ENCODE measurements at regions of chr19 and their contacts with region 1.

Region 1: DNA sequence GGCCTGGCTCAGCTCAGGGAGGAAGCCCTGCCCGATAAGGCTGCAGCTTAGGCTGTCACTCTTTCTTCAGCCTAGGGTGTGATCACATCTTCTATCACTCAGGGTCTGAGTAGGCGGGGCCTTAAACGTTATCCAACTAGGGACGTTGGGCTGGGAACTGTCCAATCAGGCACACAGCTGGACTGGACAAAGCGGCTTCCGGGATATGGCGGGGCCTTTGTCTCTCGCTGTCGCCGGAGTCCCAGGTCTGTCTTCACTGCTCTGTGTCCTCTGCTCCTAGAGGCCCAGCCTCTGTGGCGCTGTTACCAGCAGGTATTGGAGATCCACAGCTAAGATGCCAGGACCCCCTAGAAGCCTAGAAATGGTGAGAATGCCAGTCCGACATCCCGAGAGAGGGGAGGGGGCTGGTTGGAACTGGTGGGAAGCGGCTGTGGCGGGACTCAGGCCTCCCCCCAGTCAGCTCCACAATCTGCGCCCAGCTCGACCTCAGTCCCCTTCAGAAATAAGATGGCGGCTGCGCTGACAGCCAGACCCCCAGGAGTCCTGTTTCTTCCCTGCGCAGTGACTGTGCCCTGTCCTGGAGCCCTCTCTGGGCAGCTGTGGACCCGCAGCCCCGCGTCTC is at the start of gene ZNF254:
- DNase-seq: peak; percentile 89
- ATAC-seq: peak; percentile 99
- H3K4me3 ChIP-seq: peak within 1 kb of the TSS; percentile 61 to 91 (median 74)
- H3K4me3 Mint-ChIP-seq: peak within 1 kb of the TSS; percentile 96
- H3K27ac ChIP-seq: peak within 1 kb of the TSS; percentile 84 to 89
- H3K27ac Mint-ChIP-seq: peak within 1 kb of the TSS; percentile 95
- H3K4me1 ChIP-seq: peaks cover 0 to 14% of the 10 kb centered on the region in 2 donors
- H3K4me1 Mint-ChIP-seq: peaks cover 15% of the 10 kb centered on the region
- H3K27me3 ChIP-seq: no peaks in the 10 kb centered on the region
- H3K27me3 Mint-ChIP-seq: no peaks in the 10 kb centered on the region
- CTCF ChIP-seq: no peak
- total RNA-seq, gene ZNF254: 25.2 and 28.8 TPM in 2 replicates

Region 2: GRCh38 chr19:23914402-23915301 is 172.4 kb before region 1 on chr19 and contains the start of gene ZNF726:
- CTCF ChIA-PET with region 1: no interaction called
- POLR2A ChIA-PET with region 1: interaction called, 5 read pairs
- intact Hi-C with region 1: loop called (anchors 1 kb)
- DNase-seq: peak; percentile 93
- ATAC-seq: peak; percentile 95
- H3K4me3 ChIP-seq: peak within 1 kb of the TSS; percentile 44 to 82 (median 69)
- H3K4me3 Mint-ChIP-seq: peak within 1 kb of the TSS; percentile 95
- H3K27ac ChIP-seq: peak within 1 kb of the TSS; percentile 54 to 78
- H3K27ac Mint-ChIP-seq: peak within 1 kb of the TSS; percentile 86
- H3K4me1 ChIP-seq: peaks cover 0 to 7% of the 10 kb centered on the region in 2 donors
- H3K4me1 Mint-ChIP-seq: peaks cover 11% of the 10 kb centered on the region
- H3K27me3 ChIP-seq: no peaks in the 10 kb centered on the region
- H3K27me3 Mint-ChIP-seq: no peaks in the 10 kb centered on the region
- CTCF ChIP-seq: no peak
- total RNA-seq, gene ZNF726: 5.6 and 8.3 TPM in 2 replicates